ENCODE measurements at regions of chr7 and their contacts with region 1.

Region 1: GRCh38 chr7:28921822-28922221 is 36.3 kb downstream of the TRIL start:
- DNase-seq: peak; percentile 67
- H3K4me3 Mint-ChIP-seq: no peak overlapping the region
- H3K27ac Mint-ChIP-seq: no peak overlapping the region
- H3K4me1 Mint-ChIP-seq: peaks cover 19% of the 10 kb centered on the region
- H3K27me3 Mint-ChIP-seq: no peaks in the 10 kb centered on the region
- CTCF ChIP-seq: peak; percentile 95

Region 2: DNA sequence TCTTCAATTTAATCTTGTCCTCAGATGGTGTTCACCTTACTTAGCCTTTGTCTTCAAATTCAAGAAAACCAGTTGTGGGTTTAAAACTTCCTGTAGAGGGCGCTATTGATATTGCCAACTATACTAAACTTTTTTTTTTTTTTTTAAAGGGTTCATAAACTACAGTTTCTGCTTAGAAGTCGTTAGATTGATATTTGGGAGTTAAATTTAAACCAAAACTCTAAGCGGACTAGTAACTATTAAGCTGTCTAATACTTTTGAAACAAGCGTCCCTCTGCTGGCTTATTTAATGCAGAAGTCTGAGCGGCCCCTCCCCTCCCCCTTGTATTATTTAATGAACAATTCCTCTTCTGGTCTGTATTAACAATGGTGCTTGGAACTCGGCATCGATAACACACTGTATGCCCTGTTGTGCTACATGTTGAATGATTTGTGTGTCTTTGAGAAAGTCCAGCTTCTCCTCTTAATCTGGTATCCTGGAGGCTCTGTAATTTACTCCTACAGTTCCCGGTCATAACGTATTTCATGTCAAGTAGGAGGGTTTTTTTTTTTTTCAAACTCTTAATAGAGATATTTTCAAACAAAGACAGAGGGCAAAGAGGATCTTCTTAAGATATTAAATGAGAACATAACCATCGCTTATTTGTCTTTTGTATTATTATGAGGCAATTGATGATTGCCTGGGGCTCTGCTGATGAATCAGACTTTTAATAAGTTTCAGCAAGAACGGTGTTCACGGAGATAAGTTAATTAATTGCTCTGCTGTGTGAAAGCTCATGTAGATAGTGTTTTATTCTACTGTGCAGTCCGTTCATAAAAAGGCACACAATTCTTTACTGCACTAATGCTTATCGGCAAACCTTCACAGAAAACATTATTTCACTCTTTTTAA is 532.1 kb before region 1 on chr7:
- CTCF ChIA-PET with region 1: interaction called, 3 read pairs
- intact Hi-C with region 1: loop called (anchors 5 kb)
- DNase-seq: peak; percentile 39
- H3K4me3 Mint-ChIP-seq: peak overlapping the region; percentile 70
- H3K27ac Mint-ChIP-seq: peak overlapping the region; percentile 46
- H3K4me1 Mint-ChIP-seq: peaks cover 15% of the 10 kb centered on the region
- H3K27me3 Mint-ChIP-seq: no peaks in the 10 kb centered on the region
- CTCF ChIP-seq: peak; percentile 77

Region 3: GRCh38 chr7:28488061-28488791 is 433.6 kb before region 1 on chr7:
- CTCF ChIA-PET with region 1: no interaction called
- intact Hi-C with region 1: no loop called
- DNase-seq: peak; percentile 71
- H3K4me3 Mint-ChIP-seq: no peak overlapping the region
- H3K27ac Mint-ChIP-seq: peak overlapping the region; percentile 74
- H3K4me1 Mint-ChIP-seq: peaks cover 36% of the 10 kb centered on the region
- H3K27me3 Mint-ChIP-seq: no peaks in the 10 kb centered on the region
- CTCF ChIP-seq: no peak

Region 4: GRCh38 chr7:28862595-28863272 is 59.1 kb before region 1 on chr7:
- CTCF ChIA-PET with region 1: no interaction called
- intact Hi-C with region 1: no loop called
- DNase-seq: no peak
- H3K4me3 Mint-ChIP-seq: no peak overlapping the region
- H3K27ac Mint-ChIP-seq: no peak overlapping the region
- H3K4me1 Mint-ChIP-seq: peaks cover 17% of the 10 kb centered on the region
- H3K27me3 Mint-ChIP-seq: no peaks in the 10 kb centered on the region
- CTCF ChIP-seq: no peak

Region 5: DNA sequence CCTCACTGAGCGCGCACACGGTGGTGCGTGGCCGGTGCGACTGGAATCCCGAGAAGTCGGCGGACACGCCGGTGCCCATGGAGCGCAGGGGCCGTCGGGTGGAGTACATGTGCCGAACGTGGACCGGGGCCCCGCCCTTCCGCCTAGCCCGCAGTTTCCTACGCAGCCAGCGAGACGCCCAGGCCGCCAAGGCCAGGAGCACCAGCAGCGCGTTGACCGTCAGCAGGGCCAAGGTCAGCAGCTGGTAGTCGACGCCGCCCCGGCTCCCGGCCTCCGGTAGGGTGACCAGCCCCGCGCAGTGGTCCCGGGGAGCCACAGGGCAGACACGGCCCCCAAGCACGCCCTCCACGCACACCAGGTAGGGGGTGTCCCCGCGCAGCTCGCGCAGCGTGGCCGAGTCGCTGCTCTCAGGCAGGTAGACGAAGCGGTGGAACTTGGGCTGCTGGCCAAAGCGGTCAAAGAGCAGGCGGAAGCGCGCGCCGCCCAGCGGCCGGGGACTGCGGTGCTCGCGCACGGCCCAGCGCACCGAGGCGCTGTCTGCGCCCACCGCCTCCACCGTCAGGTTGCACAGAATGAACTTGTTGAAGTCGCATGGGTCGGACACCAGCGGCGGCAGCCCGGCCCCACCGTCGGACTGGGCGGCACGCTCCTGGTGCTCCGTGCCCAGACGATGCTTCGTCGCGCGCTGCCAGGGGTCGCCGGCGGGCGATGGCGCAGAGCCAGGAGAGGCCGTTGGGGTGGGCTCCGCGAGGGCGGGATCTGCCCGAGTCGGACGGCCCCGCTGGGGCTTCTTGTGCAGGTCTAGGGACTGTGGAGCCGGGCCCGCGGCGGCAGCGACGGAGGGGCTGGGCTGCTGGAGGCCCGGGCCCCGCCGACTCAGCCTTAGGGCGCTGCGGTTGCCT is 34.1 kb after region 1 on chr7:
- CTCF ChIA-PET with region 1: interaction called, 65 read pairs
- intact Hi-C with region 1: loop called (anchors 1 kb)
- DNase-seq: peak; percentile 93
- H3K4me3 Mint-ChIP-seq: peak overlapping the region; percentile 93
- H3K27ac Mint-ChIP-seq: peak overlapping the region; percentile 35
- H3K4me1 Mint-ChIP-seq: peaks cover 14% of the 10 kb centered on the region
- H3K27me3 Mint-ChIP-seq: no peaks in the 10 kb centered on the region
- CTCF ChIP-seq: peak; percentile 91

Region 6: DNA sequence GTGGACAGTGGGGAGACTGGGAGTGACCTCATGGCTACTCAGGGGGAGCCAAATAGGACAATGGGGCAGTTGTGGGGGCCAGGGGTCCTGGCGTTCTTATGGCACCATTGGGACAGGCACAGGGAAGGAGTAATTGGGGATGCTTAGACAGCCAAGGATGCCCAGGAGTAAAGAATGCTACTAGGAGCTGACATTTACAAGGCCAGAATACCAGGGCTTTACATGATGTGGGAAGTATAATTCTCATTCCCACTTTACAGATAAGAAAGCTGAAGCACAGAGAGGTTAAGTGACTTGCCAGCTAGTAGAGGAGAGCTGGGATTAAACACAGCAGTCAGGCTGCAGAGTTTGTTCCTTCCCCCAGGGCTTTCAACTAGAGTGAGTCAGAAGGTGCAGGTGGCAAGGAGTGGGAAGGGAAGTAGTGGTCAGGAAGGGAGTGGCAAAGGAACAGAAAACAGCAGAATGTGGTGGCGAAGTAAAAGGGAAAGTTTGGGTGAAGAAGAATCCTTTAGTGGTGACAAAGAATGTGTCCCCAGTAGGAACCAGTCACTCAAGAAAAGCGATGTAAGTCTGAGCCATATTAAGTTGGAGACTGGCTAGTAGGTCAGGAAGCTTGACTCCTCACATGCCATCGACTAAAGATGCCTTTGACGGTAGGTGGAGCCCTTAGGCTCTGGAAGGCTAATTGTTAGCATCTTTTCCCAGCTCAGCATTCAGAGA is 191.7 kb after region 1 on chr7:
- CTCF ChIA-PET with region 1: interaction called, 21 read pairs
- intact Hi-C with region 1: no loop called
- DNase-seq: peak; percentile 72
- H3K4me3 Mint-ChIP-seq: peak overlapping the region; percentile 60
- H3K27ac Mint-ChIP-seq: peak overlapping the region; percentile 72
- H3K4me1 Mint-ChIP-seq: peaks cover 59% of the 10 kb centered on the region
- H3K27me3 Mint-ChIP-seq: no peaks in the 10 kb centered on the region
- CTCF ChIP-seq: peak; percentile 50

Region 7: DNA sequence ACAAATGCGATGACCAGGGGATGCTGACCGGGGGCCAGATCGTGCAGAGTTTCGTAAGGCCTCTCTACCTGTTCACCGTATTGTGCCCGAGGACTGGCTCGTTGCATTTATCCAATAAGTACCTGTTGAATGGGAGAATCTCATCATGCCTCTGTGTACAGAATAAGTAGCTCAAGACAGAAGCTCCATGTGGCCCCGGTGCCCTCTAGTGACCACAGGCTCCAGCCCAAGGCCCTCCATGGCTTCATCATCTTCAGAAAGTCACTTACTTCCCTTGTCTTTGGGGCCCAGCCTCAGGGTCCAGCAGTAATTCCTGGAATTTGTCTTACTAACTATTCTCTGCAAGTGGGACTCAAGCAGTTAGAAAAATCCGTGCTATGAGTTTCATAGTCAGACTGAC is 423.8 kb after region 1 on chr7:
- CTCF ChIA-PET with region 1: interaction called, 27 read pairs
- intact Hi-C with region 1: loop called (anchors 1 kb)
- DNase-seq: peak; percentile 81
- H3K4me3 Mint-ChIP-seq: no peak overlapping the region
- H3K27ac Mint-ChIP-seq: no peak overlapping the region
- H3K4me1 Mint-ChIP-seq: no peaks in the 10 kb centered on the region
- H3K27me3 Mint-ChIP-seq: no peaks in the 10 kb centered on the region
- CTCF ChIP-seq: no peak